ENCODE measurements at regions of chr6 and their contacts with region 1.

Region 1: DNA sequence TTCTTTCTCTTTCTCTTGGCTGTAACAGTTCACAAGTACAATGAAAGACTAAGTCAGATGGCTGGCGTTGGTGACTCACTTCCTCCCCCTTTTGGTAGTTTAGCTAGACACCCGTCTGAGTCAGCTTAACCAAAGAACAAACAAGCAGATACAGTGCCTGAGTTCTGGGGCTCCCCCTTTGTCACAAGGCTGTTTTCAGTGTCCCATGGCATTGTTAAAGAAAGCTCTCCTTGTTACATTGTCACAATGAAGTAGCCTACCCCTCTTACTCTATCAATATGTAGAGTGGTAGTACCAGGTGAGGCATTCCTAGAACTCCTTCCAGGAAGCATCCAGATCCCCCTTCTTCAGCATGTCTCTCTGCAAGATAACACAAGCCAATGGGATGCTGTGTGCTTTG is 38.6 kb downstream of the KIAA0408 start:
- DNase-seq: peak in 5 of 10 donors; percentile 36 to 79 (median 49)
- H3K4me3 ChIP-seq: no peak overlapping the region
- H3K27ac ChIP-seq: no peak overlapping the region
- H3K27me3 ChIP-seq: no peaks in the 10 kb centered on the region
- CTCF ChIP-seq: peak in 51 of 56 donors; percentile 7 to 64 (median 45)

Region 2: DNA sequence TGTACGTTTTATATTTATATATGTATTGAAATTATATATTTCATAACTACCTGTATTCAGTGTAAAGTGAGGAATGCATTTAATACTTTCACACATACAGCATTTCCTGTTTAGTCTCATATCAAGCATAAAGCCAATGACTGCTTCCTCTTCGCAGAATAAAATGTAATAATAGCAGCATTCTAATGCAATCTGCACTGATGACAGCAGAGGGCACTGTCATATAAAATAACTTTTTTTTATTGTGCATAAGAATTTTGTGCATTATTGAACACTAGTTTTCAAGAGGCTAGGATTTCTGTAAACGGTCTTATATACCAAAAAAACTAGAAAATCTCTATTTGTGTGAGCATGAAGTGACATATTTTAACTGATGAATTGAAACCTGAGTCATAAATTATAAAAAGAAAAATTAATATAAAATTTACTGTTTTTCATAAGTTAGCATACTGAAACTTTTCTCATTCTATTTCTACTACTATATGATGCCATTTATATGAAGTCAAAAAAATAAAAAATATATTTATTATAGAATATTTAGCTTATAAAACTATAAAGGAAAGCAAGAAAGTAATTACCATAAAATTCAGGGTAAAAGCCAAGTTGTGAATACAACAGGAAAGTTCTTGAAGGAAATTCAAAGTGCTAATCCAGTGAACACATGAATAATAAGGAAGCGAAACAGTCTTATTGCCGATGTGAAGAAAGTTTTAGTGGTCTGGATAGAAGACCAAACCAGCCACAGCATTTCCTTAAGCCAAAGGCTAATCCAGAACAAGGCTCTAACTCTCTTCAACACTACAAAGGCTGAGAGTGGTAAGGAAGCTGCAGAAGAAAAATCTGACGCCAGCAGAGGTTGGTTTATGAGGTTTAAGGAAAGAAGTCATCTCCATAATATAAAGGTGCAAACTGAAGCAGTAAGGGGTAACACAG is 117.6 kb before region 1 on chr6:
- intact Hi-C with region 1: loop called in 1 of 2 experiments (anchors 2 kb)
- DNase-seq: no peak
- H3K4me3 ChIP-seq: no peak overlapping the region
- H3K27ac ChIP-seq: no peak overlapping the region
- H3K27me3 ChIP-seq: no peaks in the 10 kb centered on the region
- CTCF ChIP-seq: peak; percentile 58 to 88 (median 74)

Measured in dorsolateral prefrontal cortex (tissue), 120 donors.